H1 (cell line): ENCODE measurements at regions of chrX and their contacts with region 1.

Region 1: DNA sequence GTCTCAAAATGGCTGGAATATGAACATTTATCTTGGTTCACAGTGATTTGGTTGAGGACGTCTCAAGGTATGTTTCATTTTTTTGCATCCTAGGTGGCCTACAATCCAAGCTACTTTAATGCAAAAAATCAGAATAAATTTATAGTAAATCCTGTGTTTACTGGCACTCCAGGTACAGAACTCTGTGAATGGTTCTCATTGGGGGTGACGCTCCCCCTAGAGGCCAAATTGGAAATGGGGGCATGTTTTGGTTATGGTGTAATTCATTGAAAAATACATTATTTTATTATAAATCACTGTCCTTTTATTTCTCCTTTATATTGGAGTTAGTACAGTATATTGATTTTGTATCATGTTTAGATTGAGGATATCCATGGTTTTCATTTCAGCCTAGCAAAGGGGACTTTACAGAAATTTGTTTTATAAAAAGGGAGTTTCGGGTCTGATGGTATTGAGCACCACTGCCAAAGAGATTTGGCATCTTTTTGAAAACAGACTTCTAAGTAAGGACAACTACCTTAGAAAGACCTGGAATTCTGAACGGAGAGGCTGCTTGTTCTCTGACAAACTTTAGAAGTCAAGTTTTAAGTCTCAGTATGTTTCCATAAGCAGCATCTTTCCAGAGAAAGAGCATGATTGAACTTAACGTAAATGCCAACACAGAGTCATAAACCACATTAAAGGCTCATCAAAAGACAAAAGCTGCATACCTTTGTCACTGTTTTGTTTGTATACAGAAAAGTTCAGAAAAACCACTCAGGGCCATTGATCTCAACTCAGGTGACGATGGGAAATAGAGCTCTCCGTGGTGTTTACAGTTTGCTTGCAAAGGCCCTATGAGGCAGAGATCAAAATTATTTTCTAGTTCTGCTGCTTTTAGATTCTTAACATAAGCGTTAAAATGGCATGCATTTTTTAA is 19.4 kb downstream of the MTM1 start:
- DNase-seq: no peak
- H3K4me3 ChIP-seq: no peak overlapping the region
- H3K27ac ChIP-seq: no peak overlapping the region
- H3K4me1 ChIP-seq: no peaks in the 10 kb centered on the region
- H3K27me3 ChIP-seq: no peaks in the 10 kb centered on the region
- CTCF ChIP-seq: peak in 2 of 3 experiments; percentile 38 to 41; a peak in 2 of 4 replicates
- EP300 ChIP-seq: no peak
- POLR2A ChIP-seq: no peak
- RAD21 ChIP-seq: peak; percentile 52 to 59

Region 2: DNA sequence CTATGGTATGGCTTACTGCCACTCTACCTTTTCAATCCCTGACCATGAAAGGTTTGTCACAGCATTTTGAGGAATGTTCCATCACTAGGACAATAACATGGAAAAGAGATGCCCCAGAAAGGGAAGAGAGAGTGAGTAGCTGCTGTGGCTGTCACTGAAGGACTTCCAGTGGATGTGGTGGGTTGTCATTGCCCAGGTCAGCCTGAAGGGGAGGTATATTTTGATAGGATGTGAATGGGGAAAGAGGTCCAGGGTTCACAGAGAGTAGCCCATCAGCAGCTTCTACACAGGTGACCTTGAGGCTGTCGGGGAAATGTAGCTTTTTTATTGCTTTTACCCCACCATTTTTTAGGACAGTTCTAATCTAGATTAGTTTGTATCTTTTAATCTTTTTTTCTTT is 11.4 kb after region 1 on chrX:
- CTCF ChIA-PET with region 1: interaction called, 15 read pairs
- POLR2A ChIA-PET with region 1: no interaction called
- DNase-seq: no peak
- H3K4me3 ChIP-seq: no peak overlapping the region
- H3K27ac ChIP-seq: no peak overlapping the region
- H3K4me1 ChIP-seq: no peaks in the 10 kb centered on the region
- H3K27me3 ChIP-seq: no peaks in the 10 kb centered on the region
- CTCF ChIP-seq: peak in 2 of 3 experiments; percentile 4 to 20; a peak in 2 of 4 replicates
- EP300 ChIP-seq: no peak
- POLR2A ChIP-seq: no peak
- RAD21 ChIP-seq: no peak

Region 3: GRCh38 chrX:150704030-150704613 is 116.3 kb after region 1 on chrX:
- CTCF ChIA-PET with region 1: no interaction called
- POLR2A ChIA-PET with region 1: no interaction called
- DNase-seq: no peak
- H3K4me3 ChIP-seq: no peak overlapping the region
- H3K27ac ChIP-seq: no peak overlapping the region
- H3K4me1 ChIP-seq: peaks cover 0 to 2% (median 0%) of the 10 kb centered on the region in 4 experiments; a peak in 1 of 7 replicates
- H3K27me3 ChIP-seq: no peaks in the 10 kb centered on the region
- CTCF ChIP-seq: no peak
- EP300 ChIP-seq: no peak
- POLR2A ChIP-seq: no peak
- RAD21 ChIP-seq: no peak